ENCODE measurements at regions of chrX and their contacts with region 1.

Region 1: DNA sequence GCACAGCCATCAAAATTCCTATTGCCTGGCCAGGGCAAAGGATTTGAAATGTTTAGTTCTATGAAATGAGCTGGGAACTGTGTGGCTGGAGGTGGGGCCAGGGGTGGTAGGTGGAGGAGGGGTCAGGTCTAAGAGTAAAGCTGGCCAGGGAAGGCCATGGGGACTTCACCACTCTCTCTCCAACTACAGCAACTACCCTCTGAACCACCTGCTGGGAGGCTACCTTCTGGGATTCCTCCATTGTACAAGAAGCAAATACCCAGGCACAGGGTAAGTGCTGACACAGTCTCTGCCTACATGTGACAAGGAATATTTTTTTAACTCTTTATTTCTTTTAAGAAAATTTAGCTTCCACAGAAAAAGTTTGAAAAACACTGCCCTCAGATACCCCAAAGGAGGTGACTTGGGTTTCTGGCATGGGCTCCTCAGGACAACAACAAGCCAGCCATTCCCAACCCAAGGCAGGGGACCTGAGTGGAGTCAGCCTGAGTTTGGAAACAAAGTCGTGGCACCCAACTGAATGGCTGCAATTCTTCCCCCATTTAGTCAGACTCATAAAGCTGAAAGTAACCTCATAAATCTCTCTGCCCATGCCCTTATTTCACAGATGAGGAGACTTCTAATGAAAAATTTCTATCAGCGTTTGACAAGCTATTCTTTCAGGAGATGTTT is 593.8 kb upstream of the DIPK2B start:
- DNase-seq: no peak

Region 2: DNA sequence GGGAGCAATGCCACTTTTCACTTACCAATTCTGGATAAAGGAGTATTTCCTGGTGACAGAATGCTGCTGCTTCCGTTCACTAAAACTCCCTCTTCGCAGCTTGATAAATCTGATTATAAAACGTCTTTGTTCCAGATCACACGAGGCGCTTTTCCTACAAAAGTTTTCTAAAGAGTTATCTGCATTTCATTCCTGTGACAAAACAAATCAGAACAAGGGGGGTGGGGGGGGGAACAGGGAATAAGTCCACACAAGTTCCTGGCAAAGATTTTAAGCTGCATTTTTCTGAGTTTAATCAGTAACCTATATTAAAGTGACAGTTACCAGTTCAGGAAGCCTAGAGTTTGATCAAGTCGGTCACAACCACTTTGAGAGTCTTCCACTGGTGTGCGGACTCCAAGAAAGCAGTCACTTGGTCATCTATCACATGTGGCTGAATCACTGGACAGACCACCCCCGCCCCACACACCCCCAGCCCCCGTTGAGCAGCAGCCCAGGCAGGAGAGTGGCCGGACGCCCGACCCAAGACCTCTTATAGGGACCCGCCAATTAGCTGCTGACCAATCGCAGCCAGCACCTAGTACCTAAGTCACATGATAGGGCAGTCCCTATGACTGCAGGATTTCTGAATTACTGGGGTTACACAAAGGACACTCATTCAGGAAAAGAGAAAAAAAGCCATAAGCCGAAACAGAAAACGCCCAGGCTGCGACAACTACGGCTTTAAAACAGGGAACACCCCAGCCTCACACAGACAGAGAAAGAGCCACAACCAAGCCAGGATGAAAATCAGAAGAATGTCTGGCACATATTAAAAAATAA is 24.5 kb before region 1 on chrX:
- CTCF ChIA-PET with region 1: no interaction called
- POLR2A ChIA-PET with region 1: interaction called, 15 read pairs
- DNase-seq: peak; percentile 55